B cell (primary cell): ENCODE measurements at regions of chr17 and their contacts with region 1.

Region 1: DNA sequence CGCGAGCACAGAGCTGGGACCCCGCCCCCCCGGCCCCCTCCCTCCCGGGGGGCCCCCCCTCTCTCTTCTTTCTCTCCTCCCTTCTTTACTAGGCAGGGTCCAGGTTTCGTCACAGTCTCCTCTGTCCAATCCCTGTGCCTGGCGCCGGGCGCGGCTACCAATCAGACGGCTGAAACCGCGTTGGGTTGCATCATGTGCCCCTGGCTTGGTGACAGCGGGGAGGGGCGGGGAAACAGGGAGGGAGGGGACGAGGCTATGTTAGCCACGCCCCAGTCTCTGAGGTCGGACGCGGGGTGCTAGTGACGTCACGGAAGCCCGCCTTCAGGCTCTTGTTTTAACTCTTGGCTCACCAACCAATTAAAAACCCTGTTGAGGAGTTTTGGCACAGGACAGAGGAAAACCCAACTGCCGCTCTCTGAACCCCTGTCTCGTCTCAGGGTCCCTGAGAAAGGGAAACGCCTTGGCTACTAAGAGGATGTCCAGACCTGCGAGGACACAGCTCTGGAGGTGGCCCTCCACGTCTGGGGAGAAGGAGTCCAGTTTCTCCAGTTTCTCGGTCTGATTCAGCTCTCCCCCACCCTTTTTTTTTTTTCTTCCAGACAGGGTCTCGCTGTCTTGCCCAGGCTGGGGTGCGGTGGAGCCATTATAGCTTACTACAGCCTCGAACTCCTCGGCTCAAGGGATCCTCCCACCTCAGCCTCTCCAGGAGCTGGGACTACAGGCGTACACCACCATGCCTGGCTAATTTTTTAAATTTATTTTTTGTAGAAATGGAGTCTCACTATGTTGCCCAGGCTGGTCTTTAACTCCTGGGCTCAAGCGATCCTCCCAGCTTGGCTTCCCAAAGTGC is 439 bp upstream of the PLEKHH3 start:
- DNase-seq: peak; percentile 99
- ATAC-seq: peak; percentile 77
- H3K4me3 ChIP-seq: peak overlapping the region; percentile 53 to 75 (median 65)
- H3K4me3 Mint-ChIP-seq: peak overlapping the region; percentile 92
- H3K27ac ChIP-seq: no peak overlapping the region
- H3K27ac Mint-ChIP-seq: peak overlapping the region; percentile 86
- H3K4me1 ChIP-seq: peaks cover 72 to 80% of the 10 kb centered on the region in 2 donors
- H3K4me1 Mint-ChIP-seq: peaks cover 62% of the 10 kb centered on the region
- H3K27me3 ChIP-seq: peaks cover 0 to 67% (median 29%) of the 10 kb centered on the region in 4 experiments
- H3K27me3 Mint-ChIP-seq: peaks cover 14% of the 10 kb centered on the region
- CTCF ChIP-seq: no peak

Region 2: DNA sequence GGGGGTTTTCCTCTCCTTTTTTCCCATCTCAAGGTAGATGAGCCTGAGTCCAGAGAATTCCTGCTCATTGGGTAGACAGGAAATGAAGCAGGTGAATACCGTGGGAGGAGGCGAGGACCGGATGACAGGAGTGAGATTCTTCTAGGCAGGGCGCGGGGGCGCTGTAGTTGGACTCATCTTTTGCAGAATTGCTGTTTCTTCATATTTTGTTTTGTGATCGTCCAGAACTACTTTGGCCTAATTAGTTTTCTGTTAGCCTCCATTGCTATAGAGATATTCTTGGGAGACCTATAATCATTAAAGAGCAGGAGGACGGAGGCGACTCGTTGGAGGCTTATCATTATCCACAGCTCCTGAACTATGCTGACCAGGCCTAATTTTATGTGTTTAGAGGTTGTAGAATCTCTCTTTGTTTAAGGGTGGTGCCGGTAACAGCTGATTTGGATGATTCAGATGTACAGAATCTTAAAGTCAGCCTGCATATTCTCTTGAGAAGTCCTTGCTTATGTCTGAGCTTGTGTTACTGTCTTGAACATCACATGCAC is 217.9 kb before region 1 on chr17:
- CTCF ChIA-PET with region 1: no interaction called
- POLR2A ChIA-PET with region 1: no interaction called
- intact Hi-C with region 1: loop called (anchors 2 kb)
- DNase-seq: peak; percentile 44
- ATAC-seq: no peak
- H3K4me3 ChIP-seq: peak overlapping the region; percentile 67 to 97 (median 95)
- H3K4me3 Mint-ChIP-seq: peak overlapping the region; percentile 97
- H3K27ac ChIP-seq: peak overlapping the region; percentile 78 to 84
- H3K27ac Mint-ChIP-seq: peak overlapping the region; percentile 93
- H3K4me1 ChIP-seq: peaks cover 52 to 61% of the 10 kb centered on the region in 2 donors
- H3K4me1 Mint-ChIP-seq: peaks cover 59% of the 10 kb centered on the region
- H3K27me3 ChIP-seq: no peaks in the 10 kb centered on the region
- H3K27me3 Mint-ChIP-seq: no peaks in the 10 kb centered on the region
- CTCF ChIP-seq: peak; percentile 6

Region 3: GRCh38 chr17:42566883-42567573 is 110.2 kb before region 1 on chr17 and contains the start of gene MLX:
- CTCF ChIA-PET with region 1: interaction called, 3 read pairs
- POLR2A ChIA-PET with region 1: no interaction called
- intact Hi-C with region 1: loop called (anchors 5 kb)
- DNase-seq: peak; percentile 94
- ATAC-seq: peak; percentile 80
- H3K4me3 ChIP-seq: peak within 1 kb of the TSS; percentile 66 to 88 (median 74)
- H3K4me3 Mint-ChIP-seq: peak within 1 kb of the TSS; percentile 99
- H3K27ac ChIP-seq: peak within 1 kb of the TSS; percentile 76 to 78
- H3K27ac Mint-ChIP-seq: peak within 1 kb of the TSS; percentile 98
- H3K4me1 ChIP-seq: peaks cover 26 to 42% of the 10 kb centered on the region in 2 donors
- H3K4me1 Mint-ChIP-seq: peaks cover 35% of the 10 kb centered on the region
- H3K27me3 ChIP-seq: no peaks in the 10 kb centered on the region
- H3K27me3 Mint-ChIP-seq: no peaks in the 10 kb centered on the region
- CTCF ChIP-seq: no peak
- total RNA-seq, gene MLX: 66.6 and 71.5 TPM in 2 replicates

Region 4: DNA sequence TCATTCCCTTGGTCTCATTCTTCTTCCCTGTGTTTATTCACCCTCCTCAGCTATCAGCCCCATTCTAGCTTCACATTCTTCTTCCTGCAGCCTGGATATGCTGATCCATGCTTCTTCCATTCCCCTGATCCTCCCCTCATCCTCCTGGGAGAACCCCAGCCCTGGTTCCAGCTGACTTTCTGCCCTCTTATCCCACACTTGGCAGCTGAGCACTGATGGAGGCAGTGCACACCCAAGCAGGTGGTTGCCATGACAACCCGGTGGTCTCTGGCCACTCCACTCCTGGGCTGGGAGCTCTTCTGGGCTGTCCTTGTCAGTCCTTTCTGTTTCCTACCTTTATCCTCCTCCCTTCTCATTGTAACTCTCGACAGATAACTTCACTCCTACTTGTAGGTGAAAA is 34.9 kb before region 1 on chr17:
- CTCF ChIA-PET with region 1: no interaction called
- POLR2A ChIA-PET with region 1: no interaction called
- intact Hi-C with region 1: no loop called
- DNase-seq: no peak
- ATAC-seq: no peak
- H3K4me3 ChIP-seq: no peak overlapping the region
- H3K4me3 Mint-ChIP-seq: no peak overlapping the region
- H3K27ac ChIP-seq: no peak overlapping the region
- H3K27ac Mint-ChIP-seq: no peak overlapping the region
- H3K4me1 ChIP-seq: no peaks in the 10 kb centered on the region
- H3K4me1 Mint-ChIP-seq: no peaks in the 10 kb centered on the region
- H3K27me3 ChIP-seq: peaks cover 0 to 24% (median 6%) of the 10 kb centered on the region in 4 experiments
- H3K27me3 Mint-ChIP-seq: peaks cover 13% of the 10 kb centered on the region
- CTCF ChIP-seq: no peak

Region 5: DNA sequence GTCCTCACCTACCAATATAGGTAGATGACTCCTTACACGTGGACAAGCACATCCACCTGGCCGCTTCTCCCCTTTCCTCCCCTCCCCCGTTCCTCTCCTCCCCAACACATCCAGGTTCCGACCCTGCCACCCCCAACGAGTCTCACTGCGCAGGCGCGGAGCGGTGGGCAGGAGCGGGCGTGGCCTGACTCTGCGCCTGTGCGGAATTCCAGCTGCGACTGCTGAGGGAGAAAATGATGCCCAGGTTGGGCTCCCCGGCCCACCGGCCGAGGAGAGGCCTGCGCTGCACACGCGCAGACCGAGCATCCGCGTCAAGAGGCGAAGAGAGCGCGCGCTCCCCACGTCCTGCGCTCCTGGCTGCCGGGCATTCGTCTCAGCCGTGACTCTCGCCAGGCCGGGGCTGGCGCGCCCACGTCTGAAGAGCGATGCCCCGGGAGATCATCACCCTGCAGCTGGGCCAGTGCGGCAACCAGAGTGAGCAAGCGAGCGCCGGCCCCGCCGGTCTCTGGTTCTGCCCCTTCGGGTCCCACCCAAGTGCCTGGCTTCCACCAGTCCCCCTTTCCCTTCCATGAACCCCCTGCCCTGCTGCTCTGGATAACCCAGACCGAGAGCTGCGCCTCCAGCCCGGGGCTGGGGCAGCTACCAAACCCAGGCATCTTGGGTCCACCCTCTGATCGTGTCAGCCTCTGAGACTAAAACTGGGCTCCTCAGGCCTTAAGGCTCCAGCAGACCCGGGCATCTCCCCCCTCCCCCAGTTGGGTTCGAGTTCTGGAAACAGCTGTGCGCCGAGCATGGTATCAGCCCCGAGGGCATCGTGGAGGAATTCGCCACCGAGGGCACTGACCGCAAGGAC is 17.9 kb before region 1 on chr17 and contains the start of gene TUBG2:
- CTCF ChIA-PET with region 1: interaction called, 18 read pairs
- POLR2A ChIA-PET with region 1: interaction called, 7 read pairs
- intact Hi-C with region 1: loop called (anchors 2 kb)
- DNase-seq: peak; percentile 76
- ATAC-seq: peak; percentile 83
- H3K4me3 ChIP-seq: peak within 1 kb of the TSS in 4 of 5 experiments; percentile 51 to 76 (median 72)
- H3K4me3 Mint-ChIP-seq: peak within 1 kb of the TSS; percentile 93
- H3K27ac ChIP-seq: peak within 1 kb of the TSS in 1 of 2 donors; percentile 41
- H3K27ac Mint-ChIP-seq: peak within 1 kb of the TSS; percentile 79
- H3K4me1 ChIP-seq: peaks cover 16 to 23% of the 10 kb centered on the region in 2 donors
- H3K4me1 Mint-ChIP-seq: peaks cover 31% of the 10 kb centered on the region
- H3K27me3 ChIP-seq: peaks cover 0 to 27% (median 7%) of the 10 kb centered on the region in 4 experiments
- H3K27me3 Mint-ChIP-seq: peaks cover 9% of the 10 kb centered on the region
- CTCF ChIP-seq: no peak
- total RNA-seq, gene TUBG2: 18.3 and 19.0 TPM in 2 replicates

Region 6: GRCh38 chr17:42980398-42981397 is 303.5 kb after region 1 on chr17 and contains the start of gene RUNDC1:
- CTCF ChIA-PET with region 1: no interaction called
- POLR2A ChIA-PET with region 1: no interaction called
- intact Hi-C with region 1: loop called (anchors 10 kb)
- DNase-seq: peak; percentile 97
- ATAC-seq: peak; percentile 82
- H3K4me3 ChIP-seq: peak within 1 kb of the TSS; percentile 83 to 90 (median 88)
- H3K4me3 Mint-ChIP-seq: peak within 1 kb of the TSS; percentile 99
- H3K27ac ChIP-seq: peak within 1 kb of the TSS; percentile 80 to 86
- H3K27ac Mint-ChIP-seq: peak within 1 kb of the TSS; percentile 96
- H3K4me1 ChIP-seq: peaks cover 44 to 56% of the 10 kb centered on the region in 2 donors
- H3K4me1 Mint-ChIP-seq: peaks cover 48% of the 10 kb centered on the region
- H3K27me3 ChIP-seq: no peaks in the 10 kb centered on the region
- H3K27me3 Mint-ChIP-seq: no peaks in the 10 kb centered on the region
- CTCF ChIP-seq: peak; percentile 42
- total RNA-seq, gene RUNDC1: 43.7 and 45.6 TPM in 2 replicates